Mucosa of descending colon (tissue), 3 donors: ENCODE measurements at regions of chr5 and their contacts with region 1.

Region 1: GRCh38 chr5:32174011-32174870 is at the start of gene GOLPH3:
- DNase-seq: peak; percentile 96
- ATAC-seq: peak; percentile 93
- H3K4me3 ChIP-seq: peak within 1 kb of the TSS; percentile 96
- H3K4me1 ChIP-seq: peaks cover 27% of the 10 kb centered on the region
- CTCF ChIP-seq: peak; percentile 5
- total RNA-seq, gene GOLPH3: 101 to 178 (median 123) TPM

Region 2: GRCh38 chr5:31502506-31502905 is 671.7 kb before region 1 on chr5:
- intact Hi-C with region 1: no loop called
- DNase-seq: no peak
- ATAC-seq: no peak
- H3K4me3 ChIP-seq: no peak overlapping the region
- H3K4me1 ChIP-seq: no peaks in the 10 kb centered on the region
- CTCF ChIP-seq: no peak

Region 3: GRCh38 chr5:32223946-32224608 is 49.8 kb after region 1 on chr5:
- intact Hi-C with region 1: loop called in 1 of 2 experiments (anchors 10 kb)
- DNase-seq: no peak
- ATAC-seq: no peak
- H3K4me3 ChIP-seq: no peak overlapping the region
- H3K4me1 ChIP-seq: no peaks in the 10 kb centered on the region
- CTCF ChIP-seq: no peak

Region 4: DNA sequence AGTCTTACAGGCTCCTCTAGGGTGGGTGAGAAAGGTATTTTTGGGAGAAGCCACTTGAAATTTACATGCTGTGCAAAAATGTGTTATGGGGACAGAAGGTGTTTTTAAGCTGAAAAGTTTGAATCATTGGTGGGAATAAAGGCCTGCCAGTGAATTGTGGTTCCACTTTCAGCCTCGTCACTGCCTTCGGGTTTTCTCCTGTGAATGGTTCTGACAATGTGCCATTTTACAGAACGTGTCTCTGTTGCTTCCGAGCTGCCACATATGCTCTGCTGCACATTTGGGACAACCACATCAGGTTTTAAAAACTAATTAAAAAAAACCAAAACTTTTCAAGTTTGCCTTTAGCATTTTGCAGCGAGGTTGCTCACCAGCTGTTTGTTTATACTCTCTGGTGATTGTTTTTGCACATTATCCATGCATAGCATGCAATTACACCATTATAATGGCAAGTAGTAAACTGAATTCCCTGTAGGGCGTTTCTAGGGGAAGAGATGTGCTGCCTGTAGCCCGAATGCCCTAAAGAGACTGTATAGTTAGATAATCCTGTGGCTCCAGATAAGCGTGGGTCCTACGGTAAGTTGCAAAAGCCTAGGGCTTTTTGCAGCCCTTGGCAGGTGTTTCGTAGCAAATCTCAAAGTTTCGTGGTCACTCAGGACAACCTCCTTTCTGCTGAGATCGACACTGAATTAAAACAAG is 371.0 kb after region 1 on chr5:
- intact Hi-C with region 1: no loop called
- DNase-seq: no peak
- ATAC-seq: no peak
- H3K4me3 ChIP-seq: no peak overlapping the region
- H3K4me1 ChIP-seq: no peaks in the 10 kb centered on the region
- CTCF ChIP-seq: no peak